ENCODE measurements at regions of chr12 and their contacts with region 1.

Region 1: DNA sequence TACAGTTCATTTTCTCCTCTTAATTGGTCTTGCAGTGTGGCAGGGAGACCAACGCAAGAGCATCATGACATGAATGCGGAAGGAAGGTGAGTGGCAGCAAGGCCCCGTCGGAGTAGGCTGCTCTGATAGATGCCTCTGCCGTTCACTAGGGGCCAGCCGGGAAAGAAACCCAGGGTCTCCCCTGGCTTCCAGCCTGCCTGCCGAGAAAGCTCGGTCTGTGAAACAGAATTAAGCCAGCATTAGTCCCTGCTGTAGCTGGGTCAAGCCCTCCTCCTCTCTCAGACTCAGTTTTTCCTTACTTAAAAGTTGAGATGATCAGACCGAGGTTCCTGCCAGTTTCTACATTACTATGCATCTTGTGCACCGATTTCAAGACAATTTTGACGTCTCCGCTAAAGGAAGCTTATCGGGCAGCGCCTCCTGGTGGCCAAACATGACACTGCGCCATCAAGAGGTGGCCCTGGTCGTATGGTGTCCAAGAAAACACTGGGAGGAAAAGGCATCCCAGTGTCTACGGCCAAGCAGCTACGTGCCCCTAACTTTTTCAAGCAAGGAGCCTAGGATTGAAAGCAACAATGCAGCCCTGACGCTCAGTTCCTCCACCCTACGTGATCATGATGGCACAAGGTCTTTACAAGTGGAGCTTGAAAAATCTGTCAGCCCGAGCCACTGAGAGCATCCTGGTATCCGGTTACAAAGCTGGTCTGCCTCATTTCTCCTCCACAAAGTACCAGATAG is 131.6 kb downstream of the KSR2 start:
- DNase-seq: no peak
- H3K4me3 ChIP-seq: no peak overlapping the region
- CTCF ChIP-seq: peak; percentile 93

Region 2: DNA sequence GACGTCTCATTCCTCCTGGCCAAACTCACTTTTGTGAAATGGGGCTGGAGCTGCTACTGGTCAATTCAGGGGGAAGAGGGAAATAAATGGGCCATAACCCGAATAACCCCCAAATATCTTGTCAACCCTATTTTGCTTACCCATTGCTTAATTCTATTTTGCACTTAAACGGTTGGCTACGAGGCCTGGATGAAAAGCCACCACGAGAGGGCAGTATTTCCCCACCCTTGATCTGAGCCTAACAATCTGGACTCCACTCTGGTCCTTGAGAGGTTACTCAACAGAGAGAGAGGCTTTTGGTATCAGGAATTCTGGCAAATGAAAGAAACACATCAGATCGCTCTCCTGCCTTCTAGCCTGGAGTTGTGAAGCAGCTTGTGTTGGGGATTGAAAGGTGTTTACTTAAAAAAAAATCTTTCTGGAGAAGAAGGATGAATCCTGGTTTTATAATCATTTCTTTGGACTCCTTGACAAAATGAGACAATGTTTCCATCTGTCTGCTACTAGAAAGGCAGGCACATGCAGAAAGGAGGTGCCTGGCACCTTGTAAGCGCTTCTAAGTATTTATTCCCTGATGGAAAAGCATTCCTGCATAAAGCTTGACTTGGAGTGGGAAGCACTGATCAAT is 624.5 kb before region 1 on chr12:
- CTCF ChIA-PET with region 1: interaction called, 57 read pairs
- POLR2A ChIA-PET with region 1: no interaction called
- DNase-seq: peak; percentile 36
- H3K4me3 ChIP-seq: no peak overlapping the region
- CTCF ChIP-seq: peak; percentile 79

Region 3: DNA sequence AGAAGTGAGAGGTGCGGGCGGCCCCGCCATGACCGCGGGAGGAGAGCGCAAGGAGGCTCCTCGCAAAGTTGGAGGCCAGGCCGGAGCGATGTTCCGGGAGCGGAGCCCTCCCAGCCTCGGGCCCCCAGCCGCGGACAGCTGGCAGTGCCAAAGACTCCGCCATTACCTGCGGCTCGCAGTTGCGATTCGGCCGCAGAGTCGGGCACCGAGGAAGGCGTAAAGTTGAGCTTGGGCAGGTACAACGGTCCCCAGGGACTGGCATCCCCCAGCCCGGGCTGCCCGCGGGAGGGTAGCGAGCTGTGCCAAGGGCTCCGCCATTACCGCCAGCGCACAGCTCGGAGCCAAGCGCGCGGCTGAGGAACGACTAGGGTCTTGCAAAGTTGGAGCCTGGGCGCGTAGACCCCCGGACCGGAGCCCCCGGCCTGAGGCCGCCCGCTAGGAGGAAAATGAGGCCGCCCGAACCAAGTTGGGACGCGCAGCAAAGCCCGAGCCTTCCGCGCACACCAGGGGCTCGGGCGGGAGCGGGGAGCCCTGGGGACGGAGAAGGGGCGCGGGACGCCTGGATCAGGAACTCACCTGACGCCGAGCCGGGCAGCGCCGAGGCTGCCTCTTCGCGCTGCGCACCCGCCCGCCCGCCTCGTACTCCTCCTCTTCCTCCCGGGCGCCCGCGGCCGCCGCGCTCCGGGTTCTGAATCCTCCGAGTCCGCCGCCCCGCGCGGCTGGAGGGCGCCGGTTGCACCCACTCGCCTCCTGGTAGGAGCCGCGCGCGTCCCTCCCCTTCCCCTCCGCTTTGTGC is 476.4 kb before region 1 on chr12:
- CTCF ChIA-PET with region 1: interaction called, 392 read pairs
- POLR2A ChIA-PET with region 1: no interaction called
- DNase-seq: no peak
- H3K4me3 ChIP-seq: no peak overlapping the region
- CTCF ChIP-seq: no peak

Region 4: GRCh38 chr12:117377744-117378143 is 459.4 kb before region 1 on chr12:
- CTCF ChIA-PET with region 1: interaction called, 11 read pairs
- POLR2A ChIA-PET with region 1: no interaction called
- DNase-seq: no peak
- H3K4me3 ChIP-seq: no peak overlapping the region
- CTCF ChIP-seq: no peak

Region 5: GRCh38 chr12:117596968-117597367 is 240.2 kb before region 1 on chr12:
- CTCF ChIA-PET with region 1: interaction called, 107 read pairs
- POLR2A ChIA-PET with region 1: no interaction called
- DNase-seq: no peak
- H3K4me3 ChIP-seq: no peak overlapping the region
- CTCF ChIP-seq: no peak

Region 6: GRCh38 chr12:117685110-117685926 is 151.8 kb before region 1 on chr12:
- CTCF ChIA-PET with region 1: interaction called, 22 read pairs
- POLR2A ChIA-PET with region 1: interaction called, 4 read pairs
- DNase-seq: peak; percentile 44
- H3K4me3 ChIP-seq: no peak overlapping the region
- CTCF ChIP-seq: no peak

Region 7: DNA sequence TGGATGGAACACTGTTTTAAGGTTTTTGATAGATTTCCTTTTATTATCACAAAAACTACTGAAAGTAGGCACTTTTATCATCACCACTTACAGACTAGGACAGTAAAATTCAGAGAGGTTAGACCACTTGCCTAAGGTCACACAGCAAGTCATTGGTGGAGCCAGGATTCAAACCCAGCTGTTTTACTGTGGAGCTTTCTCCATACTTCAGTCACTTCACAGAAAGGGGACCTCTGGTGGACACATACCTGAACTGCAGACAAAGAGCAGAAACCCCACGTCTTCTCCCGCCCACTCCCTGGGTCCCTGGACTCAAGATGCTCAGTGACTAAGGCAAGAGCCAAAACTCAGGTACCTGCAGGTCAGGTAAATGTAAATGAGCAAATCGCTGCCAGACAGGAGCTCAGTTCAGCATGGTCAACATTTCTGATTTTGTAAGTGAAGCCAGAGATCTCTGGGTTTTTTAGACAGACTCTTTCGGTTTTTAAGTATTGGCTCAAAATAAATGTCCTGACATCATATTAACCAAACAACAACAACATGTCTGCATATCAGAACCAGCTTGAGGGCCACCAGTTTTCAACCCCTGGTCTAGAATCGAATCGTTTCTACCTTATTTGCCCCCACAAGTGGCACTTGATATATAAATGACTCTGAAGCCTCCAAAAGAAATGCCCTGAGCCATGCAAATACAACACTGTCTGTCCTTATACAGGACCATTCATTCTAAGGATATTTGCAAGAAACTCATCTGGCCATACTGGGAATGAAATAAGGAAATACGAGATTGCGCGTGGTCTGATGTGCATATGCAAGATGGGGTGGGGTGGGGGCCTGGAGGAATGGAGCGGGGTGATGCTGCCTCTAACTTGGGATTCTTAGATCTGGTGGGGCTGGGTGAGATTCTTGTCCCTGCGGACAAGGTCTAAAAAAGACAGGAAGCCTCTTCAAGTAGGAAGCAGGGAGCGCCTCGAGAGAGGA is 20.8 kb after region 1 on chr12:
- CTCF ChIA-PET with region 1: interaction called, 18 read pairs
- POLR2A ChIA-PET with region 1: interaction called, 6 read pairs
- DNase-seq: no peak
- H3K4me3 ChIP-seq: no peak overlapping the region
- CTCF ChIP-seq: peak; percentile 50

Region 8: GRCh38 chr12:117900561-117900960 is 63.4 kb after region 1 on chr12:
- CTCF ChIA-PET with region 1: no interaction called
- POLR2A ChIA-PET with region 1: no interaction called
- DNase-seq: peak; percentile 10
- H3K4me3 ChIP-seq: no peak overlapping the region
- CTCF ChIP-seq: no peak

Region 9: DNA sequence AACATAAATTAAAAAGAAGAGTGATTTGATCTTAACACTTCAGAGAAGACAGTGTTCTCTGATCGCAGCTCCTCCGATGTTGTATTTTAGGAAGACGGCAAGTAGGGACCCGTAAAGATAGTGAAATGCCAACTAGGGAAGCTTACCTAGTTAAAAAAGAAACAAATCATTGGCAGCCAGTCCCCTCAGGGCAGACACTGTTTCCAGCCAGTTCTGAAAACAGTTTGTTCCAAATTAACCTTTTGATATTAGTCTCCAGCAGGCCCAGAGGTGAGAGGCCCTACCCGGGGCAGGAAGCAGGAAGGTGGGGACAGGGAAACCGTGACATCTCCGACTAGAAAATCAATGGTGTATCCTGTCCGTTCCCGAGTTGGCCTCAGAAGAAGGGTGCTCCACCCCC is 75.6 kb after region 1 on chr12:
- CTCF ChIA-PET with region 1: no interaction called
- POLR2A ChIA-PET with region 1: no interaction called
- DNase-seq: no peak
- H3K4me3 ChIP-seq: no peak overlapping the region
- CTCF ChIP-seq: no peak